ENCODE measurements at regions of chr7 and their contacts with region 1.

Region 1: GRCh38 chr7:7640221-7641128 is at the start of gene UMAD1:
- DNase-seq: peak; percentile 96 to 99
- ATAC-seq: peak; percentile 92 to 99 (median 95)
- H3K4me3 ChIP-seq: peak within 1 kb of the TSS; percentile 77
- H3K4me3 Mint-ChIP-seq: peak within 1 kb of the TSS; percentile 93
- H3K27ac ChIP-seq: peak within 1 kb of the TSS; percentile 90
- H3K27ac Mint-ChIP-seq: peak within 1 kb of the TSS; percentile 94 to 98
- H3K4me1 ChIP-seq: peaks cover 11% of the 10 kb centered on the region
- H3K4me1 Mint-ChIP-seq: peaks cover 26 to 42% of the 10 kb centered on the region in 2 donors
- H3K27me3 ChIP-seq: no peaks in the 10 kb centered on the region
- H3K27me3 Mint-ChIP-seq: no peaks in the 10 kb centered on the region
- CTCF ChIP-seq: no peak
- total RNA-seq, gene UMAD1: 12.3 to 16.5 (median 14.6) TPM

Region 2: DNA sequence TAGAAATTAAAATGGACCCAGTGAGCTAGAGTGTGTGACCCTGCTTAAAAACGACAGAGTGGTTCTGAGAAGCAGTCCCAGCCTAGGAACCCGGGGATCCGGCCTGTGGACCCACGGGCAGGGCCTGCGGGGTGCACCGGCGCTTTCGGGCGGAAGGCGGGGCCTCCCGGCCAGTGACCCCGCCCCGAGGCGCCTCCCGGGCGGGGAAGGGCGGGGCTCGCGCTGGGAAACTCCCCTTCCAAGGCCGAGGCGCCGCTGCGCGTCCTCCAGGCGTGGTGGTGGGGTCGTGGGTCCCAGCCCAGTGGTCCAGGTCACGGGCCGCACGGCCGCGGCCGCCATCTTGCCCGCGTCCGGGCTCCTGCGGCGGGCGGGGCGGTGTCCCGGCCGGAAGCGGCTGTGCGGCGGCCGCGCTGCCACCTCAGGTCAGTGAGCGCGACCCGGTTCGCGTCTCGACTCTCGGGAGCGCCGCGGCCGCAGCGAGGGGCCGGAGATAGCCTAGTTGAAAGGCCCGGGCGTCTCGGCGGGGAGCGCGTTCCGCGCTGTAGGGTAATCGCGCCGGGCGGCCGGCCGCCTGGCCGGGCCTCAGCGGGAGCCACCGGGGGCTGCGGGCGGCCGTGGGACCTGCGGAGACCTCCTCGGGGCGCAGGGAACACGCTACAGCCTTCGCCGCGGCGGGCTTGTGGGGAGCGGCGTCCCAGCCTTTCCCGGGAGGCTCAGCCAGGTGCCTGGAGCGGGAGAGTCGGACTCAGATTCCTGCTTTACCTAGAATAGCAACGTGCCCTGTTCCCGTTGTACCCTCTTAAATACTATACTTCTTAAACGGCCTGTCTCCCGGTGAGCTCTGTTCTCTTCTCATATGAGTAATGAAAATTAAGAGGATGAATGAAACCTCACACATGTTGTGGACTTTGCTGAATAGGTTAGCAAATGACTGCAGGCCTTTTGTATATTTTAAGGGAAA is 73.5 kb before region 1 on chr7 and contains the start of gene MIOS:
- intact Hi-C with region 1: loop called (anchors 1 kb)
- DNase-seq: peak; percentile 87 to 92
- ATAC-seq: peak; percentile 93 to 96 (median 94)
- H3K4me3 ChIP-seq: peak within 1 kb of the TSS; percentile 85
- H3K4me3 Mint-ChIP-seq: peak within 1 kb of the TSS; percentile 87
- H3K27ac ChIP-seq: peak within 1 kb of the TSS; percentile 92
- H3K27ac Mint-ChIP-seq: peak within 1 kb of the TSS in 1 of 2 donors; percentile 66
- H3K4me1 ChIP-seq: peaks cover 14% of the 10 kb centered on the region
- H3K4me1 Mint-ChIP-seq: peaks cover 37 to 38% of the 10 kb centered on the region in 2 donors
- H3K27me3 ChIP-seq: no peaks in the 10 kb centered on the region
- H3K27me3 Mint-ChIP-seq: no peaks in the 10 kb centered on the region
- CTCF ChIP-seq: no peak
- total RNA-seq, gene MIOS: 23.5 to 30.9 (median 28.9) TPM

Measured in natural killer cell (primary cell).